Brain microvascular endothelial cell (primary cell): ENCODE measurements at regions of chr6 and their contacts with region 1.

Region 1: GRCh38 chr6:166275714-166276166 is 32.5 kb downstream of the PRR18 start:
- DNase-seq: peak; percentile 44
- H3K4me3 ChIP-seq: no peak overlapping the region
- H3K27ac ChIP-seq: no peak overlapping the region
- H3K27me3 ChIP-seq: no peaks in the 10 kb centered on the region
- CTCF ChIP-seq: peak; percentile 91

Region 2: DNA sequence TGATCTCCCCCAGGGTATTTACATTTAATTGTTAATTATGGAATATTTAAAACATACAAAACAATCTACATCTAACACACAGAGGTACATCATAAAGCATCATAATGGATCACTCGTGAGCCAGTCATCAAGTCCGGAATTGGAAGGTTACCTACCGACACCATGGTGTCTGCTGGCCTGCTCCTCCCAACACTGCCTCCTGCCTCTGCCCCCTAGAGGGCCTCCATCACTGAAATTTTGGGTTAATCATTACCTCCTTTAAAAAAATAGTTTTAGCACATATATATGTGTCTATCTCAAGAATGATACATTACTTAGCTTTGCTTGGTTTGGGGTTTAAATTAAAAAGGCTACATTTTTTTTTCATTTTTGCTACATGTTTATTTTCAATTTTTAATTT is 498.1 kb before region 1 on chr6:
- in situ Hi-C with region 1: no loop called
- DNase-seq: no peak
- H3K4me3 ChIP-seq: no peak overlapping the region
- H3K27ac ChIP-seq: no peak overlapping the region
- H3K27me3 ChIP-seq: no peaks in the 10 kb centered on the region
- CTCF ChIP-seq: peak; percentile 22

Region 3: GRCh38 chr6:166382933-166383801 is 107.4 kb after region 1 on chr6 and contains the start of gene MPC1:
- in situ Hi-C with region 1: loop called (anchors 25 kb)
- DNase-seq: peak; percentile 92
- H3K4me3 ChIP-seq: peak within 1 kb of the TSS; percentile 76
- H3K27ac ChIP-seq: peak within 1 kb of the TSS; percentile 65
- H3K27me3 ChIP-seq: no peaks in the 10 kb centered on the region
- CTCF ChIP-seq: no peak